Activated CD4-positive, alpha-beta T cell treated with anti-CD3 and anti-CD28 coated beads for 36 hours (primary cell): ENCODE measurements at regions of chr2 and their contacts with region 1.

Region 1: DNA sequence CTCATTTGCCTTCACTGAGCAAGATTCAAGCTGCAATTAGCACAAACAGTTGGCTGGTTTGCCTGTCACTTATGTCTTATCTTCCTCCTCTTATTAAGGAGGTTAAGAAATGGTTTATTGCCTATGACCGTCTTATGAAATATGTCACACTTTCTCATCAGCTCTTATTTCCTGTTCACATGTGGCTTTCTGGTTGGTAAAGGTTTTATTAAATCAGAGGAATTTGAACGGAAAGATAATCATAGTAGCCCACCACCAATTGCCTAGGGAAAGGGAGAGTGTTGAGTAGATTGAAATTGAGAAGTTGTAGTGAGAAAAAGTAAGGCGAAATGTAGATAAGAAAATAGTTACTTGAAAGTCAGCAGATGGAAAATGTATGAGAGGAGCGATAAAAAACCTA is 4.2 kb upstream of the IL1R1 start:
- DNase-seq: no peak
- ATAC-seq: peak; percentile 7
- H3K4me3 Mint-ChIP-seq: peak overlapping the region; percentile 7
- H3K27ac Mint-ChIP-seq: peak overlapping the region; percentile 89
- H3K4me1 Mint-ChIP-seq: peaks cover 64% of the 10 kb centered on the region
- H3K27me3 Mint-ChIP-seq: peaks cover 23% of the 10 kb centered on the region

Region 2: GRCh38 chr2:101900375-101900774 is 238.0 kb before region 1 on chr2:
- CTCF ChIA-PET with region 1: no interaction called
- POLR2A ChIA-PET with region 1: no interaction called
- intact Hi-C with region 1: loop called in 1 of 2 experiments (anchors 2 kb)
- DNase-seq: peak; percentile 82
- ATAC-seq: peak; percentile 93
- H3K4me3 Mint-ChIP-seq: peak overlapping the region; percentile 24
- H3K27ac Mint-ChIP-seq: peak overlapping the region; percentile 90
- H3K4me1 Mint-ChIP-seq: peaks cover 38% of the 10 kb centered on the region
- H3K27me3 Mint-ChIP-seq: peaks cover 10% of the 10 kb centered on the region

Region 3: DNA sequence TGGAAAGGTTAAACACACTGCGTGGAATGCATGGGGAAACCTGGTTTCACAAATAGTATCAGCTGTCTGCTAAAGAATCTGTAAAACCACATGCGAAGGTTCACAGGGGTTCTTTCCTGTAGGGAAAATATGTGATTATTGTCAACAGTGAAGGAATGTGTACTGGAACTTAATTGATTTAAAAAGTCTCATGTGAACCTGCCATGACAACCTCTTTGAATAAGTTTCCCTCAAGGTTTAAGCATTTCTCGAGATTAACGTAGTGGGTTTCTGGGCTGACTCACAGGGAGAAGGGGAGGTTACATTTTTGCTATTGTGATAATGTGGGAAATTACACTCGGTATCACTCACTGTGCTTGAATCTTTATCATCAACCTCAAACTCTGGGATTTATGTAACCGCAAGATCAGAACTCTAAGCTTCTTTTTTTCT is 24.0 kb before region 1 on chr2:
- CTCF ChIA-PET with region 1: no interaction called
- POLR2A ChIA-PET with region 1: no interaction called
- intact Hi-C with region 1: loop called (anchors 1 to 2 kb)
- DNase-seq: peak; percentile 52
- ATAC-seq: peak; percentile 87
- H3K4me3 Mint-ChIP-seq: peak overlapping the region; percentile 1
- H3K27ac Mint-ChIP-seq: peak overlapping the region; percentile 55
- H3K4me1 Mint-ChIP-seq: peaks cover 86% of the 10 kb centered on the region
- H3K27me3 Mint-ChIP-seq: peaks cover 14% of the 10 kb centered on the region

Region 4: DNA sequence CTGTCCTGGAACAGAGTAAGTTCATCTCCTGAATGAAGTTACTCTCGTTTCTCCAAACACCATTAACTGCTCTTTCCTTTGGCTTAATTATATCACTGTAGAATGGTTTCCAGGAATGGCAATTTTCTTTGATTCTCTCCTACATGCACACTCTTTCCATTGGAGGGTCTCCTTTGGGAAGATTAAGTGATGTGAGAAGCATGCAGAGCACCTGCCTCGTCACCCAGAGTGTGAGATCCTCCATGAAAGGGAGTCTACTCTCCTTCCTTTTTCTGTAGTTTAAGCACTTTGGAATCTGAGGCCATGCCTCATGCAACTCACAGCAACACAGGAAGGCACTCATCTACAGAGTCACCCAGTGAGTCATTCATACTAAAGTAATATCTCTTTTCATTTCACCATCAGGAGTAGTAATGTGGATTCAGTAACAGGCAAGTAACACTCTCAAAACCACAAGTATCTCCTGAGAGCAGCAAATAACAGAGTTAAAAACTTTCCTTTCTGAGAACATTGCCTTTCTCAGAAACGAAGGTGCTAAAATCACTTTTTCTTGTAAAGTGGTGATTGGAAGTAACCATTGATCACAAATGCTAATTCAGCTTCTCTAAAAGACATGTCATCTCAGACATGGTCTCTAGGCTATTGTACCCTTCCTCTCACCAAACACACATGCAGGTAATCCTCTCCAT is 120.2 kb after region 1 on chr2:
- CTCF ChIA-PET with region 1: no interaction called
- POLR2A ChIA-PET with region 1: no interaction called
- intact Hi-C with region 1: loop called in 1 of 2 experiments (anchors 1 kb)
- DNase-seq: peak; percentile 63
- ATAC-seq: peak; percentile 92
- H3K4me3 Mint-ChIP-seq: peak overlapping the region; percentile 26
- H3K27ac Mint-ChIP-seq: peak overlapping the region; percentile 97
- H3K4me1 Mint-ChIP-seq: peaks cover 45% of the 10 kb centered on the region
- H3K27me3 Mint-ChIP-seq: no peaks in the 10 kb centered on the region